ENCODE measurements at regions of chr15 and their contacts with region 1.

Region 1: DNA sequence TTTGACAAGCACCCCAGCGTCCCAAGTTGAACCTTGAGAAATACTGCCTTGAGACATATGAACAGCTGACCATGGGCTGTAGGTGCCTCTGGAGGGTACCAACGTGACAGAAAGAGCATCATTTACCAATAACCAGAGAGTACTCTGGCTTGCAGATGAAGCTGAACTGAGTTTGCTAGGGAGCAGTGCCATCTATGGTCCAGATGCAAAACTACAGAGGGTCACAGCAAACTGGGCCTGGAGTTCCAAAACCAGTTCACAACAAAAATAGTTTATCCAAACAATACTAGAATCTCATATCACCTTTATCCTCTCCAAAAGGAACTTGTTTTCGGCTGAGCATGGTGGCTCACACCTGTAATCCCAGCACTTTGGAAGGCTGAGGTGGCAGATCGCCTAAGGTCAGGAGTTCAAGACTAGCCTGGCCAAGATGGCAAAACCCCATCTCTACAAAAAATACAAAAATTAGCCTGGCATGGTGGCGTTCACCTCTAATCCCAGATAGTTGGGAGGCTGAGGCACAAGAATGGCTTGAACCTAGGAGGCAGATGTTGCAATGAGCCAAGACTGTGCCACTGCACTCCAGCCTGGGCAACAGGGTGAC is 69.3 kb downstream of the CHAC1 start:
- DNase-seq: peak; percentile 80
- H3K4me3 ChIP-seq: no peak overlapping the region
- H3K27ac ChIP-seq: no peak overlapping the region
- H3K4me1 ChIP-seq: peaks cover 32% of the 10 kb centered on the region
- H3K27me3 ChIP-seq: no peaks in the 10 kb centered on the region
- CTCF ChIP-seq: peak; percentile 67 to 73
- POLR2A ChIP-seq: no peak

Region 2: GRCh38 chr15:40914486-40914885 is 108.1 kb before region 1 on chr15:
- CTCF ChIA-PET with region 1: interaction called, 10 read pairs
- POLR2A ChIA-PET with region 1: no interaction called
- dilution Hi-C with region 1: loop called (anchors 10 kb)
- intact Hi-C with region 1: no loop called
- DNase-seq: no peak
- H3K4me3 ChIP-seq: no peak overlapping the region
- H3K27ac ChIP-seq: peak overlapping the region; percentile 69
- H3K4me1 ChIP-seq: peaks cover 41% of the 10 kb centered on the region
- H3K27me3 ChIP-seq: no peaks in the 10 kb centered on the region
- CTCF ChIP-seq: no peak
- POLR2A ChIP-seq: no peak

Region 3: GRCh38 chr15:40952901-40953712 is 69.5 kb before region 1 on chr15 and contains the start of gene CHAC1:
- CTCF ChIA-PET with region 1: interaction called, 26 read pairs
- POLR2A ChIA-PET with region 1: interaction called, 3 read pairs
- dilution Hi-C with region 1: no loop called
- intact Hi-C with region 1: no loop called
- DNase-seq: peak; percentile 98
- H3K4me3 ChIP-seq: peak within 1 kb of the TSS; percentile 32 to 90 (median 37)
- H3K27ac ChIP-seq: peak within 1 kb of the TSS; percentile 61
- H3K4me1 ChIP-seq: peaks cover 10% of the 10 kb centered on the region
- H3K27me3 ChIP-seq: no peaks in the 10 kb centered on the region
- CTCF ChIP-seq: peak in 1 of 2 donors; percentile 9
- POLR2A ChIP-seq: peak; percentile 77
- total RNA-seq, gene CHAC1: 4.6 and 5.6 TPM in 2 replicates

Region 4: GRCh38 chr15:40982855-40983254 is 39.7 kb before region 1 on chr15:
- CTCF ChIA-PET with region 1: interaction called, 75 read pairs
- POLR2A ChIA-PET with region 1: interaction called, 3 read pairs
- dilution Hi-C with region 1: no loop called
- intact Hi-C with region 1: loop called (anchors 1 kb)
- DNase-seq: peak; percentile 93
- H3K4me3 ChIP-seq: peak overlapping the region in 1 of 3 experiments; percentile 23
- H3K27ac ChIP-seq: peak overlapping the region; percentile 94
- H3K4me1 ChIP-seq: peaks cover 40% of the 10 kb centered on the region
- H3K27me3 ChIP-seq: no peaks in the 10 kb centered on the region
- CTCF ChIP-seq: peak; percentile 12 to 42
- POLR2A ChIP-seq: peak; percentile 57

Region 5: DNA sequence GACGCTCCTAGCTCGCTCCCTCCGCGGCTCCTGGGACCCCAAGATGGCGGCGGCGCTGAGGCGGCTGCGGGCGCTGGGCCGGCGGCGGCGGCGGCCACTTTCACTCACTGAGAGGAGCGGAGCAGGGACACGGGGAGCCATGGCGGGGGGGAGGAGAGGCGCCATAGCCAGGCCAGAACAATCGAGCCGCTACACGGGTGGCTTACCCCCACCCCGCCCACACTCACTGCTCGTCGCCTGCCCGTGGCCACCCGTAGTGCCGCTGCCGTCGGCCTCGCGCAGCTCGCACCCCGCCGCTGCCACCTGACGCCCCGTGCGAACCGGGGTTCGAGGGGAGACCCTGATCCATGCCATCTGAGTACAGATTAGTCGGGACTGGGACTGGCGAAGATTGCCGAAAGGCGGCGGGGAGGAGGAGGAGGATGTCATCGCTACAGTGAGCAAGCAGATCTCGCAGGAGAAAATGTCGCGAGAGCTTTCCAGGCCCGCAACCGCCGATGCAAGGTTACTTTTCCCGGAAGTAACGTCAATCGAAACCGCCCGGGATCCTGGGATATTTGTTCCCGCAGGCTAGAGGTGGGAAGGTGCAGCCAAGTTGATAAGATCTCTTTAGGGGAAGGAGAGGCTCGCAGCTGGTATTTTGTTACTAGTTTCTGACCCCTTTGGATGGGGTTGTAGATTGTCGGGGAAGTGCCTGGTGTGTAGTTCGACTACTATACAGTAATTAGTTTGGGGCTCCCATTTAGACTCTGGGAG is 93.7 kb after region 1 on chr15 and contains the start of gene INO80:
- CTCF ChIA-PET with region 1: no interaction called
- POLR2A ChIA-PET with region 1: no interaction called
- dilution Hi-C with region 1: no loop called
- intact Hi-C with region 1: no loop called
- DNase-seq: peak; percentile 97
- H3K4me3 ChIP-seq: peak within 1 kb of the TSS; percentile 89 to 95 (median 90)
- H3K27ac ChIP-seq: peak within 1 kb of the TSS; percentile 96
- H3K4me1 ChIP-seq: peaks cover 11% of the 10 kb centered on the region
- H3K27me3 ChIP-seq: peaks cover 0 to 3% of the 10 kb centered on the region in 2 experiments
- CTCF ChIP-seq: no peak
- POLR2A ChIP-seq: peak; percentile 97
- total RNA-seq, gene INO80: 22.9 and 29.1 TPM in 2 replicates

Region 6: DNA sequence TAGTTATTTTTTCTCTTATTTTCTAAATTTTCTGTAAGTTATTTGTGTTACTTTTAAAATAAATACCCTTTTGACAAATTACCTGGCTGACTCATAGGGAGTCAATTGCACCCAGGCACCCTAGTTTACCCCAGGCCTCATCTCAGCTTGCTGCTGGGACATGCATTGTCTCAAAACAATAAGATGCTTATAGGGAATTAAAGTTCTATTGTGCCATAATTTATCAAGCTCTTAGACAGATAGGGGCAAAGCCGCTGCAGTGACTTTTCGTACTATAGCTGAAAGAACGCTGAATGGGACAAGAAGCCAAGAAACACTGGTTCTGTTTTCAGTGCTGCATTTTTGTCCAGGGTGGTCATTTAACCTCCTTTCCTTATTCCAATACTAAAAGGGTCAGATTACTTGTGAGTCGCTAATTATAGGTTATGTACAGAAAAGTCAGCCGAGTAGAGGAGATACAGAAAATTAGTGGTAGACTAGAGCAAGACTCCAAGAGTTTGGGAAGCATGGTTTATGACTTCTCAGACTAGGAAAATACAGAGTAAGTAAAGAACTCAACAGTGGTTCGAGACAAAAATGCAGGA is 157.7 kb after region 1 on chr15:
- CTCF ChIA-PET with region 1: interaction called, 9 read pairs
- POLR2A ChIA-PET with region 1: no interaction called
- dilution Hi-C with region 1: no loop called
- intact Hi-C with region 1: loop called (anchors 5 kb)
- DNase-seq: no peak
- H3K4me3 ChIP-seq: no peak overlapping the region
- H3K27ac ChIP-seq: no peak overlapping the region
- H3K4me1 ChIP-seq: no peaks in the 10 kb centered on the region
- H3K27me3 ChIP-seq: no peaks in the 10 kb centered on the region
- CTCF ChIP-seq: no peak
- POLR2A ChIP-seq: no peak

Measured in endothelial cell of umbilical vein (primary cell).